Activated CD4-positive, alpha-beta memory T cell treated with anti-CD3 and anti-CD28 coated beads for 36 hours (primary cell): ENCODE measurements at regions of chr6 and their contacts with region 1.

Region 1: GRCh38 chr6:107957909-107958688 is at the start of gene SEC63:
- DNase-seq: peak; percentile 99
- H3K4me3 Mint-ChIP-seq: peak within 1 kb of the TSS; percentile 100
- H3K27ac Mint-ChIP-seq: peak within 1 kb of the TSS; percentile 95
- H3K4me1 Mint-ChIP-seq: peaks cover 26% of the 10 kb centered on the region
- H3K27me3 Mint-ChIP-seq: no peaks in the 10 kb centered on the region
- total RNA-seq, gene SEC63: 90.6 to 95.9 TPM

Region 2: DNA sequence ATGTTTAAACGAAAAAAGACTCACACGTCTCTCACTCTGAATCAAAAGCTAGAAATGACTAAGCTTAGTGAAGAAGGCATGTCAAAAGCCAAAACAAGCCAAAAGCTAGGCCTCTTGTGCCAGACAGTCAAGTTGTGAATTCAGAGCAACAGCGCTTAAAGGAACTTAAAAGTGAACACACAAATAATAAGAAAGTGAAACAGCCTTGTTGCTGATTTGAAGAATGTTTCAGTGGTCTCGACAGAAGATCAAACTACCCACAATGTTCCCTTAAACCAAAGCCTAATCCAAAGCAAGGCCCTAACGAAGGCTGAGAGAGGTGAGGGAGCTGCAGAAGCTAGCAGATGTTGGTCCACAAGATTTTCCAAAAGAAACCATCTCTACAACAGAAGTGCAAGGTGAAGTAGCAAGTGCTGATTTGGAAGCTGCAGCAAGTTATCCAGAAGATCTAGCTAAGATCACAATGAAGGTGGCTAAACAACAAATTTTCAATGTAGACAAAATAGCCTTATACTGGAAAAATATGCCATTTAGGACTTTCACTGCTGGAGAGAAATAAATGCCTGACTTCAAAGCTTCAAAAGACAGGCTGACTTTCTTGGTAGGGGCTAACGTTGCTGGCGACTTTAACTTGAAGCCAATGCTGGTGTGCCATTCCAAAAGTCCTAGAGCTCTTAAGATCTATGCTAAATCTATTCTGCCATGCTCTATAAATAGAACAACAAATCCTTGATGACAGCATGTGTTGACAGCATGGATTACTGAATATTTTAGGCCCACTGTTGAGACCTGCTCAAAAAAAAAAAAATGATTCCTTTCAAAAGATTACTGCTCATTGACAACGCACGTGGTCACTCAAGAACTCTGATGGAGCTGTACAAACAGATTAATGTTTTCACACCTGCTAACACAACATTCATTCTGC is 40.4 kb before region 1 on chr6:
- CTCF ChIA-PET with region 1: no interaction called
- POLR2A ChIA-PET with region 1: interaction called, 3 read pairs
- intact Hi-C with region 1: loop called (anchors 1 kb)
- DNase-seq: peak; percentile 35
- H3K4me3 Mint-ChIP-seq: no peak overlapping the region
- H3K27ac Mint-ChIP-seq: peak overlapping the region; percentile 81
- H3K4me1 Mint-ChIP-seq: peaks cover 17% of the 10 kb centered on the region
- H3K27me3 Mint-ChIP-seq: no peaks in the 10 kb centered on the region

Region 3: DNA sequence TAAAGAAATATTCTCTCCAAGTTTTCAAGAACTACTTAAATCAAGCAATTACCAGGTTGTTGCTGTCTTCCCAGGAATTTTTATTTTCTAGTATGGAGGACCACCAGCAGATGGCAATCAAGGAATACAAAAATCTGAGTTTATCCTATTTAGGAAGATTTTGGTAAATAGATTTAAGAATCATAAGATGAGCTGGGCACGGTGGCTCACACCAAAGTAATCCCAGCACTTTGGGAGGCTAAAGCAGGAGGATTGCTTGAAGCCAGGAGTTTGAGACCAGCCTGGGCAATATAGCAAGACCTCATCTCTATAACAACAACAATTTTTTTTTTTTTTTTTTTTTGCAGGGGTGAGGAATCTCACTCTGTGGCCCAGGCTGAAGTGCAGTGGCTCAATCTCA is 19.2 kb after region 1 on chr6:
- CTCF ChIA-PET with region 1: no interaction called
- POLR2A ChIA-PET with region 1: no interaction called
- intact Hi-C with region 1: no loop called
- DNase-seq: no peak
- H3K4me3 Mint-ChIP-seq: no peak overlapping the region
- H3K27ac Mint-ChIP-seq: no peak overlapping the region
- H3K4me1 Mint-ChIP-seq: no peaks in the 10 kb centered on the region
- H3K27me3 Mint-ChIP-seq: no peaks in the 10 kb centered on the region

Region 4: GRCh38 chr6:107991061-107991460 is 33.0 kb after region 1 on chr6:
- CTCF ChIA-PET with region 1: no interaction called
- POLR2A ChIA-PET with region 1: no interaction called
- intact Hi-C with region 1: no loop called
- DNase-seq: no peak
- H3K4me3 Mint-ChIP-seq: no peak overlapping the region
- H3K27ac Mint-ChIP-seq: no peak overlapping the region
- H3K4me1 Mint-ChIP-seq: no peaks in the 10 kb centered on the region
- H3K27me3 Mint-ChIP-seq: peaks cover 3% of the 10 kb centered on the region

Region 5: DNA sequence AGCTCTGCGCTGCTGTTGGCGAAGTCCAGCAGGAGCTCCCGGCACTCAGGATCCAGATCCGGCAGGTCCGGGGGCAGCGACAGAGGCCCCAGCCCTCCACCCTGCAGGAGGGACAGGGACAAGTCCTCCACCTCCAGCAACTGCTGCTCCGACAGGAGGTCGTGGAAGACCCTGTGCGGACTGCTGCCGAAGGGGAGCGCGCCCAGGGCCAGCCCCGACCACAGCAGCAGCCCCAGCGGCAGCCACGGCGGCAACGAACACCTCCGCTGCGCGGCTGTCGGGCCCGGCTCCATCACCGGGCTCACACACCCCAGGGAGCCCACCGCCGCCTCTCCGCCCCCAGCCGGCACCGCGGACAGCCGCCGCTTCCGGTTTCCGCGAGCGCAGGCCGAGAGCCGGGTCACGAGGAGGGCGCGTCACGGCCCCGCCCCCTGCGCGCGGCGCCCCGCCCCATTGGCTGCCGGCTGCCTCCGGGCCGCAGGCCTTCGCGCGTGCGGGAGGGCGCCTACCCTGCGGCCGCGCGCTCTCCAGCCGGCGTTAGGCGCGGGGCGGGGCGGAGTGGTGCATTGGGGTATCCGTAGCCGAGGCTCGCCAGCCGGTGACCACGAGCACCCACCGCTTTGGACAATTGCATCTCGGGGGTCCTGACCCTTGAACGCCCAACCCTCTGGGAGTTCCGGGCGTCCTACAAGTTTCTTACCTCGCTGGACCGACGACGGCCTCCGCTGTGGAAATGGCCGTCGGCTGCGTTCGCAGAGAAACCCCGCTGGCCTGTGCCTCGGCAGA is 116.5 kb after region 1 on chr6 and contains the start of gene OSTM1:
- CTCF ChIA-PET with region 1: no interaction called
- POLR2A ChIA-PET with region 1: no interaction called
- intact Hi-C with region 1: loop called (anchors 1 kb)
- DNase-seq: peak; percentile 95
- H3K4me3 Mint-ChIP-seq: peak within 1 kb of the TSS; percentile 80
- H3K27ac Mint-ChIP-seq: peak within 1 kb of the TSS; percentile 65
- H3K4me1 Mint-ChIP-seq: peaks cover 24% of the 10 kb centered on the region
- H3K27me3 Mint-ChIP-seq: no peaks in the 10 kb centered on the region
- total RNA-seq, gene OSTM1: 14.0 to 16.3 TPM

Region 6: GRCh38 chr6:108105571-108105970 is 147.5 kb after region 1 on chr6:
- CTCF ChIA-PET with region 1: no interaction called
- POLR2A ChIA-PET with region 1: no interaction called
- intact Hi-C with region 1: no loop called
- DNase-seq: no peak
- H3K4me3 Mint-ChIP-seq: no peak overlapping the region
- H3K27ac Mint-ChIP-seq: no peak overlapping the region
- H3K4me1 Mint-ChIP-seq: no peaks in the 10 kb centered on the region
- H3K27me3 Mint-ChIP-seq: peaks cover 6% of the 10 kb centered on the region